ENCODE measurements at regions of chr1 and their contacts with region 1.

Region 1: DNA sequence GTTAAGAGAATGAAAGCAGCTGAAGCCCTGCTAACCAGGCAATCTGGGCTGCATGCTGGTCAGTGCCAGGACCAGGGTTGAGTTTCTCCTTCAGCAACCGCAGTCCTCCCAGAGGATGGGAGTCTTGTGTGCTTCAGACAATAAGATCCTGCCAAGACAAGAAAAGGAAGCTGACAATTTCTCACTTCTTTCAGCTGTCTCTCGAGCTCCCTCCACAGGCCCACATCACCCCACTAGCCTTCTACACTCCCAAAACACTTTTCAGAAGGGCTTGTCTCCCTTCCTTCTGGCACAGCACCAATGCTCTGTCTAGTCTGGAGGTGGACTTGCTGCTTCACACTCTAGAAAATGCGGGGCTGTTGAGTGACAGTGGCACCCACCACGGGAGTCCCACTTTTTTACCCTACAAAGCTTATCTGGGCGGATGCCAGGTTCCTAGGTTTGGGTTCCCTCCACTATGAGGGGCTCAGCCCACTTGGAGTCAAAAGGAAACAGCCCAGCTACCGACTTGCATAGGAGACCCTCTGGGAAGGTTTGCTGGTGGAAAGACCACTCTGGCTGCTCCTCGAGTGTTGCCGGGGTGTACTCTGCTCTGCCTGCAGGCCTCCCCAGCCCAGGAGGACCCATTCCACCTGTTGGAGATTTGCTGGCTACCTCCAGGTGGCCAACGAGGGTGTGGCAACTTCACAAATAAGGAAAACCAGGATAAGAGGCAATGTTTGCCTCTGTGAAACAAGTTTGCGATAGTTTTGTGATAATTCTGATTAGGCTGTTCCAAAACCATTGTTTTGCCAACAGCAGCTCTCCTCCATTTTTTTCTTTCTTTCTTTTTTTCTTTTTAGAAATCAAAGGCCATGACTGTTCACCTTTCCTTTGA is 68.9 kb downstream of the TENT5C start:
- DNase-seq: peak in 13 of 14 experiments; percentile 39 to 82 (median 57)
- ATAC-seq: peak; percentile 86
- H3K4me3 ChIP-seq: no peak overlapping the region
- H3K4me3 Mint-ChIP-seq: no peak overlapping the region
- H3K27ac ChIP-seq: no peak overlapping the region
- H3K27ac Mint-ChIP-seq: no peak overlapping the region
- H3K4me1 ChIP-seq: peaks cover 13% of the 10 kb centered on the region
- H3K4me1 Mint-ChIP-seq: peaks cover 7% of the 10 kb centered on the region
- H3K27me3 ChIP-seq: no peaks in the 10 kb centered on the region
- H3K27me3 Mint-ChIP-seq: peaks cover 13% of the 10 kb centered on the region
- CTCF ChIP-seq: peak; percentile 61

Region 2: DNA sequence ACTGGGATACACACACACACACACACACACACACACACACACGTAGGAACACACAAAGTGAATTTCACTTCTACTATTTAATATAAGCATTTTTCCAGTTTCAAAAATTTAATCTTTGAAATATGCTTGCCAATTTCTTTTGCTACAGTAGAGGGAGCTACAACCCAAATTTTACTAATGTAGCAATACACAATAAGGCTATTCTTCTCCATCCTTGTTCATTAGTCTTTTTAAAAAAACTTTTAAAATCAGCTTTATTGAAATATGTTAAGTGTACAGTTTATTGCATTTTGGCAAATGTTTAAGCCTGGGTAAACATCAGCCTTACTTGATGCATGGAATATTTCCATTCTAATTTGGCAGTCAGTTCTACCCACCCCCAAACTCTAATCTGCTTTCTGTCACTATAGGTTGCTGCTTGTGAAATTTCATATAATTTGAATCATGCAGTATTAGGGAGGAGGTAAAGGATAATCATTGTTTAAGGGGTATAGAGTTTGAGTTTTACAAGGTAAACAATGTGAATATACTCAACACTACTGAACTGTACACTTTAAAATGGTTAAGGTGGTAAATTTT is 161.9 kb before region 1 on chr1:
- CTCF ChIA-PET with region 1: interaction called, 14 read pairs
- POLR2A ChIA-PET with region 1: no interaction called
- intact Hi-C with region 1: loop called (anchors 1 to 5 kb)
- DNase-seq: peak in 3 of 14 experiments; percentile 40 to 52 (median 42)
- ATAC-seq: no peak
- H3K4me3 ChIP-seq: no peak overlapping the region
- H3K4me3 Mint-ChIP-seq: no peak overlapping the region
- H3K27ac ChIP-seq: no peak overlapping the region
- H3K27ac Mint-ChIP-seq: no peak overlapping the region
- H3K4me1 ChIP-seq: no peaks in the 10 kb centered on the region
- H3K4me1 Mint-ChIP-seq: no peaks in the 10 kb centered on the region
- H3K27me3 ChIP-seq: no peaks in the 10 kb centered on the region
- H3K27me3 Mint-ChIP-seq: no peaks in the 10 kb centered on the region
- CTCF ChIP-seq: peak; percentile 60

Region 3: DNA sequence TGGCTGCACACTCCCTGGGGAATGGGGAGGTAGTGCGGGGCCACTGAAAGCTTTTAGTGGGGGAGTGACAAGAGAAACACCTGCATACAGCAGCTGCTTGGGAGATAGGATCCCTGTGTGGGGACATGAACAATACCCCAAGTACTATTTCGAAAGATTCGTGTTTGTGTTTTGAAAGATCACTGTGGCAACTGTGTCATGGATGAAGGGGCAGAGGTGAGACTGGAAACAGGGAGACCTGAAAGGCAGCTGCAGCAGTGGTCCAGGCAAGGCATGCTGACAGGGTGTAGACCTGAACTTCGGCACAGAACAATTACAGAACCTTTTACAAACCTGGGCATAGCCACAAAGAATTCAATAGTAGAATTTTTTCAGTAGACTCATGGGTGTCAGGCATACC is 36.0 kb before region 1 on chr1:
- CTCF ChIA-PET with region 1: interaction called, 5 read pairs
- POLR2A ChIA-PET with region 1: no interaction called
- intact Hi-C with region 1: loop called in 1 of 2 experiments (anchors 5 kb)
- DNase-seq: no peak
- ATAC-seq: no peak
- H3K4me3 ChIP-seq: no peak overlapping the region
- H3K4me3 Mint-ChIP-seq: no peak overlapping the region
- H3K27ac ChIP-seq: no peak overlapping the region
- H3K27ac Mint-ChIP-seq: no peak overlapping the region
- H3K4me1 ChIP-seq: peaks cover 16% of the 10 kb centered on the region
- H3K4me1 Mint-ChIP-seq: peaks cover 13% of the 10 kb centered on the region
- H3K27me3 ChIP-seq: no peaks in the 10 kb centered on the region
- H3K27me3 Mint-ChIP-seq: peaks cover 12% of the 10 kb centered on the region
- CTCF ChIP-seq: no peak

Region 4: GRCh38 chr1:117654493-117655219 is 20.1 kb before region 1 on chr1:
- CTCF ChIA-PET with region 1: interaction called, 63 read pairs
- POLR2A ChIA-PET with region 1: interaction called, 19 read pairs
- intact Hi-C with region 1: no loop called
- DNase-seq: peak in 3 of 14 experiments; percentile 43 to 62 (median 49)
- ATAC-seq: peak; percentile 13
- H3K4me3 ChIP-seq: peak overlapping the region; percentile 4
- H3K4me3 Mint-ChIP-seq: peak overlapping the region; percentile 71
- H3K27ac ChIP-seq: peak overlapping the region in 1 of 2 donors; percentile 43
- H3K27ac Mint-ChIP-seq: peak overlapping the region; percentile 84
- H3K4me1 ChIP-seq: peaks cover 94% of the 10 kb centered on the region
- H3K4me1 Mint-ChIP-seq: peaks cover 84% of the 10 kb centered on the region
- H3K27me3 ChIP-seq: no peaks in the 10 kb centered on the region
- H3K27me3 Mint-ChIP-seq: peaks cover 20% of the 10 kb centered on the region
- CTCF ChIP-seq: no peak

Region 5: DNA sequence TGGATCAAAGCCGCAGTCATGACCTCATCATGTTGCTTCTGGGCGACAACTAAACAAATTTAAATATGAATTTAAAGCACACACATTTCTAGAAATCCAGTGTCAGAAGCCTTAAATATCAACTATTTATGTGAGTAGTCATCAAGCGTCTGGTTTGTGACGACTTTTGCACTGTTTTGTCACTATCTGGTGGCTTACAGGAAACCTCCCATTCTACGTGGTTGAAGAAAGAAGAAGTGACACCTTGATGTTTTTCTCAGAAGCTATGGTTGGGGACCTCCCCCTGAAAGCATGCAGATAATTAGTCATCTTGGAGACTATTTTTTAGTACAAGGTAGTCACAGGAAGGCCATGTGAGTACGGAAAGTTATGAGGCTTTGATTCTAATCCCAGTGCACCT is 10.4 kb before region 1 on chr1:
- CTCF ChIA-PET with region 1: interaction called, 63 read pairs
- POLR2A ChIA-PET with region 1: interaction called, 19 read pairs
- intact Hi-C with region 1: no loop called
- DNase-seq: peak in 12 of 14 experiments; percentile 25 to 95 (median 54)
- ATAC-seq: peak; percentile 81
- H3K4me3 ChIP-seq: no peak overlapping the region
- H3K4me3 Mint-ChIP-seq: peak overlapping the region; percentile 13
- H3K27ac ChIP-seq: peak overlapping the region; percentile 27 to 76
- H3K27ac Mint-ChIP-seq: peak overlapping the region; percentile 82
- H3K4me1 ChIP-seq: peaks cover 70% of the 10 kb centered on the region
- H3K4me1 Mint-ChIP-seq: peaks cover 63% of the 10 kb centered on the region
- H3K27me3 ChIP-seq: no peaks in the 10 kb centered on the region
- H3K27me3 Mint-ChIP-seq: peaks cover 4% of the 10 kb centered on the region
- CTCF ChIP-seq: no peak

Region 6: GRCh38 chr1:117758444-117759316 is 83.9 kb after region 1 on chr1:
- CTCF ChIA-PET with region 1: interaction called, 13 read pairs
- POLR2A ChIA-PET with region 1: no interaction called
- intact Hi-C with region 1: loop called in 1 of 2 experiments (anchors 5 kb)
- DNase-seq: peak; percentile 48 to 83 (median 56)
- ATAC-seq: peak; percentile 86
- H3K4me3 ChIP-seq: peak overlapping the region; percentile 52
- H3K4me3 Mint-ChIP-seq: peak overlapping the region; percentile 84
- H3K27ac ChIP-seq: no peak overlapping the region
- H3K27ac Mint-ChIP-seq: no peak overlapping the region
- H3K4me1 ChIP-seq: peaks cover 14% of the 10 kb centered on the region
- H3K4me1 Mint-ChIP-seq: peaks cover 10% of the 10 kb centered on the region
- H3K27me3 ChIP-seq: peaks cover 0 to 4% of the 10 kb centered on the region in 2 experiments
- H3K27me3 Mint-ChIP-seq: peaks cover 36% of the 10 kb centered on the region
- CTCF ChIP-seq: peak; percentile 95

Measured in CD4-positive, alpha-beta T cell (primary cell).